GM12878 (cell line): ENCODE measurements at regions of chr2 and their contacts with region 1.

Region 1: GRCh38 chr2:96856776-96857673 is 791 bp downstream of the ANKRD39 start:
- DNase-seq: no peak
- ATAC-seq: peak; percentile 5
- H3K4me3 ChIP-seq: peak overlapping the region; percentile 99
- H3K27ac ChIP-seq: peak overlapping the region; percentile 86
- H3K4me1 ChIP-seq: peaks cover 3% of the 10 kb centered on the region; the same call in 1 of the 2 replicates
- H3K27me3 ChIP-seq: no peaks in the 10 kb centered on the region
- CTCF ChIP-seq: no peak
- EP300 ChIP-seq: no peak
- POLR2A ChIP-seq: no peak
- RAD21 ChIP-seq: no peak

Region 2: GRCh38 chr2:96768083-96768561 is 88.9 kb before region 1 on chr2:
- CTCF ChIA-PET with region 1: interaction called, 20 read pairs
- POLR2A ChIA-PET with region 1: interaction called, 10 read pairs
- RAD21 ChIA-PET with region 1: interaction called, 15 read pairs
- SMC1A ChIA-PET with region 1: interaction called, 6 read pairs
- in situ Hi-C with region 1: no loop called
- intact Hi-C with region 1: no loop called
- DNase-seq: peak; percentile 66
- ATAC-seq: peak; percentile 57
- H3K4me3 ChIP-seq: peak overlapping the region; percentile 76
- H3K27ac ChIP-seq: peak overlapping the region; percentile 68
- H3K4me1 ChIP-seq: peaks cover 47% of the 10 kb centered on the region
- H3K27me3 ChIP-seq: no peaks in the 10 kb centered on the region
- CTCF ChIP-seq: no peak
- EP300 ChIP-seq: no peak
- POLR2A ChIP-seq: peak; percentile 45; the same call in 1 of the 2 replicates
- RAD21 ChIP-seq: no peak

Region 3: DNA sequence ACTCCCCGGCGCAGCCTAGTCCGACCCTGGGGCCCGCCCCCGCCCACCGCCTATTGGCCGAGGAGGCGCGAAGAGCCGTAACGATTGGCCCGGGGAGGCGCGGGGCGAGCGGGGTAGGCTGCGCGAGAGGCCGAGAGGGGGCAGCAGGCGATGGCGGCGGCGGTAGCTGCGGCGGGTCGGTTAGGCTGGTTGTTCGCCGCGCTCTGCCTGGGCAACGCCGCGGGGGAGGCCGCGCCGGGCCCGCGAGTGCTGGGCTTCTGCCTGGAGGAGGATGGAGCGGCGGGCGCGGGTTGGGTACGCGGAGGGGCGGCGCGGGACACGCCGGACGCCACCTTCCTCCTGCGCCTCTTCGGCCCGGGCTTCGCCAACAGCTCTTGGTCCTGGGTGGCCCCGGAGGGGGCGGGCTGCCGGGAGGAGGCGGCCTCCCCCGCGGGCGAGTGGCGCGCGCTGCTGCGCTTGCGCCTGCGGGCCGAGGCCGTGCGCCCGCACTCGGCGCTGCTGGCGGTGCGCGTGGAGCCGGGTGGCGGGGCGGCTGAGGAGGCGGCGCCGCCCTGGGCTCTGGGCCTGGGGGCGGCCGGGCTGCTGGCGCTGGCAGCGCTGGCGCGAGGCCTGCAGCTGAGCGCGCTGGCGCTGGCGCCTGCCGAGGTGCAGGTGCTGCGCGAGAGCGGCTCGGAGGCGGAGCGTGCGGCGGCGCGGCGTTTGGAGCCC is 40.7 kb before region 1 on chr2 and contains the start of gene CNNM3:
- CTCF ChIA-PET with region 1: interaction called, 9 read pairs
- POLR2A ChIA-PET with region 1: interaction called, 11 read pairs
- RAD21 ChIA-PET with region 1: interaction called, 9 read pairs
- SMC1A ChIA-PET with region 1: interaction called, 7 read pairs
- in situ Hi-C with region 1: no loop called
- intact Hi-C with region 1: no loop called
- DNase-seq: no peak
- ATAC-seq: peak; percentile 97
- H3K4me3 ChIP-seq: peak within 1 kb of the TSS; percentile 96
- H3K27ac ChIP-seq: peak within 1 kb of the TSS; percentile 50
- H3K4me1 ChIP-seq: peaks cover 12% of the 10 kb centered on the region
- H3K27me3 ChIP-seq: no peaks in the 10 kb centered on the region
- CTCF ChIP-seq: peak; percentile 32 to 52 (median 52); a peak in 5 of 6 replicates
- EP300 ChIP-seq: no peak
- POLR2A ChIP-seq: peak; percentile 94
- RAD21 ChIP-seq: no peak
- polyA plus RNA-seq, gene CNNM3: 0.72 to 1.9 TPM

Region 4: DNA sequence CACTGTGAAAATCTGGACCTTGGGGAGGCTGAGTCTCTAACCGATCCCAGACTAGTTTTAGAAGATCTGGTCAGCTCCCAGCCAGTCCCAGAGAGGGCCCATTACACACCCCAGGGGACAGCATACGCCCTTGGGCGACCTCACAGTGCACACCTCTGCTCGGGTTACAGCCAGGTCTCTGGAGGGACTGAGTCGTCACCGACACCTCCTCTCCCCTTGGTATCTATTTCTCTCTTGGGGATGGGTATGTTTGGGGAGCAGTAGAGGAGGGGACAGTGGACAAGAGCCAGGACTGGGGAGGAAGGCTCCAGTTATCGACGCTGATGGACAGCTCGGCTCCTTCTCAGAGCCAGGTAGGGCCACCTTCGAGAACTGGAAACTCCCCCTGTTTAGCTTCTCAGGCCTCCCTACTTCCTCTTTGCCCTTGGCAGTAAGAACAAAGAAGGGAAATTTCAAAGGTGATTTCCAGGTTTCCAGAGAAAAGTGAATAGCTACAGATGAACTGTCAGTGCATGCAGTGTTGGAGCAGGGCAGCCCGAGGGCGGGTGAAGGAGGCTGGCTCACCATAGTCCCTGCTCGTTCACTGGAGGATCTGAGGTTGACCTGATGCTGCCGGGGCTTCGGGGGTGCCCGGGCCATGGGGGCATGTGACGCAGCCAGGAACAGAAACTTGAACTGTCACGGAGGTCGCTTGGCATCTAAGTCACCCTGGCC is 17.2 kb after region 1 on chr2:
- CTCF ChIA-PET with region 1: interaction called, 31 read pairs
- POLR2A ChIA-PET with region 1: interaction called, 28 read pairs
- RAD21 ChIA-PET with region 1: interaction called, 39 read pairs
- SMC1A ChIA-PET with region 1: interaction called, 14 read pairs
- in situ Hi-C with region 1: no loop called
- intact Hi-C with region 1: no loop called
- DNase-seq: peak; percentile 76
- ATAC-seq: peak; percentile 82
- H3K4me3 ChIP-seq: peak overlapping the region; percentile 26; the same call in 1 of the 2 replicates
- H3K27ac ChIP-seq: peak overlapping the region; percentile 74
- H3K4me1 ChIP-seq: peaks cover 37% of the 10 kb centered on the region
- H3K27me3 ChIP-seq: no peaks in the 10 kb centered on the region; a peak in 1 of 4 replicates
- CTCF ChIP-seq: no peak
- EP300 ChIP-seq: peak in 1 of 2 experiments; percentile 58; a peak in 2 of 4 replicates
- POLR2A ChIP-seq: peak; percentile 52
- RAD21 ChIP-seq: no peak

Region 5: DNA sequence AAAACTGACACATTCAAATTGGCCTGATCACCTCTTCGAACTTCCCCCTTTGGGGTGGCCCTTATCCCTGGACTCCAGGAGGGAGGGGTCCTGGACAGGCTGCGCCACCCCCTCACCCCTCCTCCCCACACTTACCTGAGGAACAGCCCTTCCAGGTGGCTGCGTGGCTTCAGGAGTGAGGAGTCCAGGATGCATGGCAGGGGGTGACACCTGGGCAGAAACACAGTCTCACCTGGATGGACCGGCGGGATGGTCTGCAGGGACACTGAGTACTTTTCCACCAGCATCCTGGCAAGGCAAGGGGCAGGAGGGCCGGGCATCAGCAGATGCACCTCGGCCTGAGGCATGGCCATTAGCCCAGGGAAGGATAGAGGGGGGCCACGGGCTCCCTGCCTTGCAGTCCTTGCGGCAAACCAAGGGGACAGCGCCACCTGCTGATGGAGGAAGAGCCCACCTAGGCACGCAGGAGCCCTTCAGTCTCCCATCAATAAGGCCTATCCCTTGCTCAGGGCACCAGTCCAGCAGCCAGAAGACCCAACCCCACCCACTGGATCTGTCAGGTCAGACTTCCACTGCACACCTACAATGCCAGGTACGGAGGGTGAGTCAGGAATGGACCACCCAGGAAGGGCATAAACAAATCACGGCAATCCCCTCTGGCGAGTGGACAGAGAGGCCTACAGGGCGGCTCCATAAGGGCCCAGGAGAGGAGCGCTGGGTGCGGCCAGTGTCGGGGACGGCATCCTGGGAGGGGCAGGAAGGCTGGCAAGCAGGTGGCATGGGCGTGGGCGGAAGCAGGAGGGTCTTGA is 103.3 kb after region 1 on chr2:
- CTCF ChIA-PET with region 1: interaction called, 238 read pairs
- POLR2A ChIA-PET with region 1: interaction called, 4 read pairs
- RAD21 ChIA-PET with region 1: interaction called, 148 read pairs
- SMC1A ChIA-PET with region 1: interaction called, 99 read pairs
- in situ Hi-C with region 1: no loop called
- intact Hi-C with region 1: loop called (anchors 1 kb)
- DNase-seq: no peak
- ATAC-seq: peak; percentile 99
- H3K4me3 ChIP-seq: no peak overlapping the region
- H3K27ac ChIP-seq: no peak overlapping the region
- H3K4me1 ChIP-seq: peaks cover 14% of the 10 kb centered on the region
- H3K27me3 ChIP-seq: no peaks in the 10 kb centered on the region
- CTCF ChIP-seq: peak; percentile 94 to 97 (median 97)
- EP300 ChIP-seq: no peak
- POLR2A ChIP-seq: no peak
- RAD21 ChIP-seq: peak; percentile 85

Region 6: GRCh38 chr2:97673182-97673914 is 816.3 kb after region 1 on chr2:
- CTCF ChIA-PET with region 1: no interaction called
- POLR2A ChIA-PET with region 1: no interaction called
- RAD21 ChIA-PET with region 1: no interaction called
- SMC1A ChIA-PET with region 1: no interaction called
- in situ Hi-C with region 1: no loop called
- intact Hi-C with region 1: no loop called
- DNase-seq: no peak
- ATAC-seq: no peak
- H3K4me3 ChIP-seq: no peak overlapping the region
- H3K27ac ChIP-seq: peak overlapping the region; percentile 36; the same call in 1 of the 2 replicates
- H3K4me1 ChIP-seq: peaks cover 9% of the 10 kb centered on the region
- H3K27me3 ChIP-seq: no peaks in the 10 kb centered on the region
- CTCF ChIP-seq: no peak
- EP300 ChIP-seq: no peak
- POLR2A ChIP-seq: no peak
- RAD21 ChIP-seq: no peak